ENCODE measurements at regions of chr4 and their contacts with region 1.

Region 1: DNA sequence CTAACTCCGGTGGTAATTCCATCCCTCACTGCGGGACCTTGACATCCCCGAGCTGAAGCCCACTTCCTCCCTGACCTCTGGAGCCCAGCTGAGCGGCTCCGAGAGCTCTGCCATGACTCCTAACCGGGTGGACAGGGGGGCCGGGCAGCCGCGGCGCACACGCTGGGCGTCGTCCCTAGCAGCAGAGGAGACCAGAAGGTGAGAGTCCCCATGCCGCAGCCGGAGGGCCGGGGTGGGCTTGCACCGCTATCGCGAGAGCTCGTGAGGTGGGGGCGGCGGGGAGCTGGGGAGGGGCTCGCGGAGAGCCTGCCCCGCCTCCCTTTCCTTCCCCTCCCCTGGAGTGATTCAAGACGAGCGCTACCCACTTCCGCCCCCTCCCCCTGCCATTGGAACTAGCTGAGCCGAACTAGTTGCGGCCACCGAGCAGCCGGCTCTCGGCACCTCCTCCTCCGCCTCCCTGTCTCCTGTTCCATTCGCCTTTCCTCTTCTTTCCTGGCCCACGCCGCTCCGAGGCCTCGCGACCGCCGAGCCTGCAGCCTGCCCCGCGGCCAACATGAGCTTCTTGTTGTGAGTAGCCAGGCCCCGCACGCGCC is at the start of gene MOB1B:
- DNase-seq: peak; percentile 58 to 76
- H3K4me3 ChIP-seq: peak within 1 kb of the TSS; percentile 81
- H3K27ac ChIP-seq: no peak within 1 kb of the TSS
- H3K4me1 ChIP-seq: 0 out of 2 replicates have a peak, but pooled peaks cover 5% of the 10 kb centered on the region
- H3K27me3 ChIP-seq: no peaks in the 10 kb centered on the region
- CTCF ChIP-seq: peak; percentile 40; the same call in 1 of the 2 replicates
- total RNA-seq, gene MOB1B: 14.5 and 14.6 TPM in 2 replicates

Region 2: GRCh38 chr4:70704331-70705145 is 197.5 kb before region 1 on chr4:
- CTCF ChIA-PET with region 1: no interaction called
- POLR2A ChIA-PET with region 1: no interaction called
- intact Hi-C with region 1: loop called (anchors 5 kb)
- DNase-seq: peak; percentile 42 to 73
- H3K4me3 ChIP-seq: peak overlapping the region; percentile 87
- H3K27ac ChIP-seq: peak overlapping the region; percentile 72
- H3K4me1 ChIP-seq: peaks cover 24% of the 10 kb centered on the region
- H3K27me3 ChIP-seq: no peaks in the 10 kb centered on the region
- CTCF ChIP-seq: peak; percentile 44; the same call in 1 of the 2 replicates

Region 3: GRCh38 chr4:70715097-70715496 is 187.0 kb before region 1 on chr4:
- CTCF ChIA-PET with region 1: no interaction called
- POLR2A ChIA-PET with region 1: no interaction called
- intact Hi-C with region 1: no loop called
- DNase-seq: no peak
- H3K4me3 ChIP-seq: no peak overlapping the region
- H3K27ac ChIP-seq: no peak overlapping the region
- H3K4me1 ChIP-seq: peaks cover 16% of the 10 kb centered on the region
- H3K27me3 ChIP-seq: no peaks in the 10 kb centered on the region
- CTCF ChIP-seq: no peak

Region 4: GRCh38 chr4:70746179-70746839 is 155.8 kb before region 1 on chr4:
- CTCF ChIA-PET with region 1: no interaction called
- POLR2A ChIA-PET with region 1: interaction called, 13 read pairs
- intact Hi-C with region 1: no loop called
- DNase-seq: no peak
- H3K4me3 ChIP-seq: no peak overlapping the region
- H3K27ac ChIP-seq: no peak overlapping the region
- H3K4me1 ChIP-seq: no peaks in the 10 kb centered on the region
- H3K27me3 ChIP-seq: no peaks in the 10 kb centered on the region
- CTCF ChIP-seq: no peak

Region 5: DNA sequence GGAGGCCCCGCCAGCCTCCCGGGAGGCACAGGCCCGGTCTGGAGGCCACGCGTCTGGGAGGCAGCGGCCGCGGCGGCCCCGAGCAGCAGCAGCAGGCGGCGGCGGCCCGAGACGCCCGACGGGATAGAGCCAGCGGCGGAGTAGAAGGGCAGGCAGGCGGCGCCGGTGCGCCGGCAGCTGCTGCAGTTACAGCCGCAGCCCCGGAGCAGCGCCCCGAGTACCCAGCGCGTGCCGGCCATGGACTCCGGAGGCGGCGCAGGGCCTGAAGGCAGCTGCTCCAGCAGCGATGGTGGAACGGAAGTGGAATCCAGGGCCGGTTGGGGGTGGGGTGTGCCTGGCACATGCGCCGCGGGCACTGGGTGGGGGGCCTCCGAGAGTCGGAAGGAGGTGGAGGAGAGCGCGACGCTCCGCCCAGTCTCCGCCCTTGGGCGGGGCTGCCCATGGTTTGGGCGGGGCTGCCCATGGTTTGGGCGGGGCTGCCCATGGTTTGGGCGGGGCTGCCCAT is 62.4 kb before region 1 on chr4 and contains the start of gene GRSF1:
- CTCF ChIA-PET with region 1: no interaction called
- POLR2A ChIA-PET with region 1: no interaction called
- intact Hi-C with region 1: loop called (anchors 2 kb)
- DNase-seq: peak; percentile 58 to 86
- H3K4me3 ChIP-seq: peak within 1 kb of the TSS; percentile 80
- H3K27ac ChIP-seq: peak within 1 kb of the TSS; percentile 54
- H3K4me1 ChIP-seq: peaks cover 6% of the 10 kb centered on the region
- H3K27me3 ChIP-seq: no peaks in the 10 kb centered on the region
- CTCF ChIP-seq: no peak
- total RNA-seq, gene GRSF1: 52.4 and 70.0 TPM in 2 replicates

Region 6: GRCh38 chr4:70849291-70849690 is 52.8 kb before region 1 on chr4:
- CTCF ChIA-PET with region 1: no interaction called
- POLR2A ChIA-PET with region 1: interaction called, 21 read pairs
- intact Hi-C with region 1: no loop called
- DNase-seq: no peak
- H3K4me3 ChIP-seq: no peak overlapping the region
- H3K27ac ChIP-seq: no peak overlapping the region
- H3K4me1 ChIP-seq: no peaks in the 10 kb centered on the region
- H3K27me3 ChIP-seq: no peaks in the 10 kb centered on the region
- CTCF ChIP-seq: no peak

Region 7: DNA sequence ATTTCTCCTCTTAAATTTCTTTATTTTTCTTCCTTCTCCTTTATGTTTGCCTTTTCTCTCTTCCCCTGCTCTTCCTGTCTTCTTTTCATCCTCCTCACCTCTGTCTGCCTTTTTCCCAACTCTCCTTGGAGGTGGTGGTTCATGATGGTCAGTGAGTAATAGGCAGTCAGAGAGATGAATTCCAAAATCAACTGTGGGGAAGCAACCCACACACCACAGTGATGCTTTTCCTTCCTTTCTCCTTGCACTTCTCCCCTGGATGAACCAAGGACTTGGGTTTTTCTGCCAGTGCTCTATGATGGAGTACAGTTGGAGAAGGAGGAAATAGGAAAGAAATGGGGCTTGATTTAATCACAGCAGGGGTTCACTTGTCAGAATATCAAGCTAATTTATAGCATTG is 245.2 kb after region 1 on chr4:
- CTCF ChIA-PET with region 1: no interaction called
- POLR2A ChIA-PET with region 1: no interaction called
- intact Hi-C with region 1: no loop called
- DNase-seq: no peak
- H3K4me3 ChIP-seq: no peak overlapping the region
- H3K27ac ChIP-seq: no peak overlapping the region
- H3K4me1 ChIP-seq: no peaks in the 10 kb centered on the region
- H3K27me3 ChIP-seq: no peaks in the 10 kb centered on the region
- CTCF ChIP-seq: no peak